ENCODE measurements at regions of chr9 and their contacts with region 1.

Region 1: DNA sequence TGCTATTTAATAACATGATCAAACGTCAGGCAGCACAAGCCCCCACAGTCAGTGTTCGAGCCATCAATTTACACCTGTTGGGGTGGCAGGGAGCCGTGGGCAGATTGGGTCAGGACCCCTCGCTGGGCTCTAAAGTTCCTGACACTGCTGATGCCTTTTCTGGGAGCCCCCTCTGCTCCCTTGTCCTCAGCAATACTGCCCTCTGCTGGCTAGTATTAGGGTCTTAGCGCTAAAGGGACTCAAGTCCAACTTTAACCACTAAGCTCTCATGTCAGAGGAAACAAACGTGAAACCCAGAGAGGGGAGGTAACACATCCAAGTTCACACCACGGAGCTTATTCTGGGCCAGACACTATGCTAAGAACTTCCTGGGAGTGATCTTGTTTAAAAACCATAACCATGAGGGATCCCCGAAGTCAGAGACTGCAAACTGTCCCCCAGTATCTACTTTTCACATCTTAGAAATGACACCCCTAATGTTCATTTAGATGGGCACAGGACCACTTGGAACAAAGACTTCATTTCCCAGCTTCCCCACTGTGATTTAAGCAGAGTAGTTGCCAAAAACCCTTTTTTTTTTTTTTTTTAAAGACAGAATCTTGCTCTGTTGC is 20.4 kb downstream of the ANKS6 start:
- DNase-seq: peak; percentile 68
- H3K4me3 ChIP-seq: no peak overlapping the region
- H3K27ac ChIP-seq: no peak overlapping the region
- H3K4me1 ChIP-seq: peaks cover 10% of the 10 kb centered on the region
- H3K27me3 ChIP-seq: no peaks in the 10 kb centered on the region
- CTCF ChIP-seq: peak; percentile 77 to 83
- POLR2A ChIP-seq: no peak

Region 2: DNA sequence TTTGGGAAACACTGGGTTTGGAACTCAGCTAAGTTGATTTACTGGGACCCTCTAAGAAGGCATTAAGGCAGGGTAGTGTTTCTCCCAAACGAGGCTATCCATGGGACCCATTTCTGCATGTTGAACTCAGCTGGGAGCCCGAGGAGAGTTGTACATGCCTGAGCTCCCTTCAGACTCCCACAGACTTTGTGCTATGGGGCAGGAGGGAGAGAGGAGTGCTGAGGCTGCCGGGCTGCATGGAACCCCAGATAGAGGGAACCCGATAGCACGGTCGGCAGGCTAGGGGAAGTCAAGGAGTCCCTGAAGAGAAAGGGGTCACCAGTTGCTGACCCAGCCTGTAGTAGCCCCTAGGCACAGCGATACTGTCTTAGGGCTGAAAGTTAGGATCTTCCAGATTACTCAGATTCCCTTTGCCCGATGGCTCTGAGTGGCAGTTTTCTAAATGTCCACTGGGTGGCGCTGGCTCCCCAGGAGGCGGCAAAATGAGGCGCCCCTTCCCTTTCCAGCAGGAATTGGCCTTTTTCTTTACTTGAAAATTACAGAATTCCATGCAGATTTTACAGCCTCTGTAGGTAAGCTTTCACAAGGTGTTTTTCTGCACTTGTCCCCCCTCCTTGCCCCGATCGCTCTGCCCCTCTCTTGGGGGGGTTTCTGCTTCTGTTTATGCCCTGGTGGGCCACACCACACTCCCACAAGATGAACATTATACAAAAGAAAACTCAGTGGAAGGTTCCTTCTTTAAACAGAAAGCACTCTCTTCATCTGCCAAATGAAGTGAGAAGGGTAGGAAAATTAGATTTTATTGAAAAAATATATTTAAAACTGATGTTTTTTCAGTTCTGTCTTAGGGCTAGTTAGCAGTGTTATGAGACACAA is 701.6 kb before region 1 on chr9:
- CTCF ChIA-PET with region 1: interaction called, 5 read pairs
- POLR2A ChIA-PET with region 1: no interaction called
- dilution Hi-C with region 1: no loop called
- intact Hi-C with region 1: loop called (anchors 1 kb)
- DNase-seq: peak; percentile 64
- H3K4me3 ChIP-seq: no peak overlapping the region
- H3K27ac ChIP-seq: no peak overlapping the region
- H3K4me1 ChIP-seq: no peaks in the 10 kb centered on the region
- H3K27me3 ChIP-seq: no peaks in the 10 kb centered on the region
- CTCF ChIP-seq: peak; percentile 87 to 93
- POLR2A ChIP-seq: no peak

Region 3: GRCh38 chr9:98263482-98264357 is 512.2 kb before region 1 on chr9:
- CTCF ChIA-PET with region 1: interaction called, 13 read pairs
- POLR2A ChIA-PET with region 1: no interaction called
- dilution Hi-C with region 1: no loop called
- intact Hi-C with region 1: no loop called
- DNase-seq: peak; percentile 82
- H3K4me3 ChIP-seq: no peak overlapping the region
- H3K27ac ChIP-seq: no peak overlapping the region
- H3K4me1 ChIP-seq: no peaks in the 10 kb centered on the region
- H3K27me3 ChIP-seq: no peaks in the 10 kb centered on the region
- CTCF ChIP-seq: peak; percentile 90 to 92
- POLR2A ChIP-seq: no peak

Region 4: GRCh38 chr9:98333703-98334582 is 442.0 kb before region 1 on chr9:
- CTCF ChIA-PET with region 1: interaction called, 12 read pairs
- POLR2A ChIA-PET with region 1: no interaction called
- dilution Hi-C with region 1: no loop called
- intact Hi-C with region 1: no loop called
- DNase-seq: peak; percentile 94
- H3K4me3 ChIP-seq: no peak overlapping the region
- H3K27ac ChIP-seq: peak overlapping the region; percentile 98
- H3K4me1 ChIP-seq: peaks cover 41% of the 10 kb centered on the region
- H3K27me3 ChIP-seq: no peaks in the 10 kb centered on the region
- CTCF ChIP-seq: no peak
- POLR2A ChIP-seq: peak; percentile 80

Region 5: DNA sequence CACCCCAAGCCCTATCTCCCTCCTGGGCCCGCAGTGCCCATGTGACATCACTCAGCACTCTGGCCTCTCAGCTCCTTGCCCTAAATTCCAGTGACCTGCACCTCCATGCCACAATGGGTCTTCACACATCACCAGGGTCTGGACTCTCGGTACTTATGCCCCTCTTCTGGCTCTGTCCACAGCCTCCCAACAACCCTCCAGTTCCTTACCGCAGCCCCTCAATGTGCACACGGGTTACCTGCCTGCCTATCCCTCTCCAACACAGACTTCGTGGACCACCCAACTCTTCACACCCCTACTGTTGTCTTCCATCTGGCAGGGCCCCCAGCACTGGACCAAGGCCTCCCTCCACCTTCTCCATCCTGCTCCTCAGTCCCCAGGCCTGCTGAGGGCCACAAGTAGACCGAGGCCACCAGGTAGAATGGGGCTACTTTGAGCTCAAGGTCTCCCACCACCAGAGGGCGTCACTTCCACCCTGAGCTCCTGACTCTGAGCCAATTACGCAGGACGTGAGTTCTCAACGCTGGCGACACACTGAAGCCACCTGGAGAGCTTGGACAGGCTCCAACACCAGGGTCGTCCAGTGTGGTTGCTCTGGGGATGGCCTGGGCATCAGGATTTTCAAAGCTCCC is 239.3 kb before region 1 on chr9:
- CTCF ChIA-PET with region 1: interaction called, 7 read pairs
- POLR2A ChIA-PET with region 1: no interaction called
- dilution Hi-C with region 1: no loop called
- intact Hi-C with region 1: loop called (anchors 2 kb)
- DNase-seq: no peak
- H3K4me3 ChIP-seq: no peak overlapping the region
- H3K27ac ChIP-seq: no peak overlapping the region
- H3K4me1 ChIP-seq: peaks cover 5% of the 10 kb centered on the region
- H3K27me3 ChIP-seq: no peaks in the 10 kb centered on the region
- CTCF ChIP-seq: peak; percentile 14 to 27
- POLR2A ChIP-seq: no peak

Region 6: DNA sequence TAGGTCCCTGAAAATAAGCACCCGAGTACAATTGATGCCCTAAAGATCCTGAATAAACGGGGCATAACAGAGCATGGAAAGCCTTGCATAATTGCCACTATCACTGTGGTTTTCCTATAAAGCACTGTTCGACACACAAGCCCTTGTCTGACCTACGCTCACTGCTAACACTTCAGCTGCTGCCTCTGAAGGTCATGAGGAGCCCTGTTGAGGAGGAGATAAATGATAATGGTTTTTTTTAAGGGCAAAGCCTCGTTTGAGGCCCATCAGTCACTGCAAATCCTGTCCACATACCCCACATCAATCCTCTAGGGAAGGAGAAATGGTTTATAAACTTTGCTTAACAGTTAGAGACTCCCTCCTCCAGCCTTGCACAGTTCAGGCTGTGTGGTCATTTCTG is 102.3 kb before region 1 on chr9:
- CTCF ChIA-PET with region 1: no interaction called
- POLR2A ChIA-PET with region 1: no interaction called
- dilution Hi-C with region 1: no loop called
- intact Hi-C with region 1: no loop called
- DNase-seq: no peak
- H3K4me3 ChIP-seq: no peak overlapping the region
- H3K27ac ChIP-seq: no peak overlapping the region
- H3K4me1 ChIP-seq: no peaks in the 10 kb centered on the region
- H3K27me3 ChIP-seq: no peaks in the 10 kb centered on the region
- CTCF ChIP-seq: no peak
- POLR2A ChIP-seq: no peak

Region 7: DNA sequence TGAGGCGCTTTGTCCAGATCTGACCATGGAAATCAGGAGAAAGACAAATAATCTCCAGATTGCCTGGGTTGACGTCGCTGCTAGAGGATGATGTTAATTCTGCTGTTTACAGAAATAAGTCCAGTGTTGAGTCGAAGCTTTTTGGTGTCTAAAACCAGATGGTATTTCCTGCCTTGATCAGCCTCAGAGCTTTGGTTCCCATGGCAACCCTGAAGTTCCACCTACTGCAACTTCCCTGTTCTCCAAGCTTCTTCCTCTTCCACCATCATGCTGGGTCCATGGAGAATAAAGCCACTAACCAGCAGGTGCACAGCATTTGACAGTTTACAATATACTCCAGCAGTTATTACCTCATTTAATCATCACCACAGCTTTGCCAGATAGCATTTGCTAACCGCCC is 49.2 kb before region 1 on chr9:
- CTCF ChIA-PET with region 1: interaction called, 24 read pairs
- POLR2A ChIA-PET with region 1: no interaction called
- dilution Hi-C with region 1: no loop called
- intact Hi-C with region 1: no loop called
- DNase-seq: no peak
- H3K4me3 ChIP-seq: no peak overlapping the region
- H3K27ac ChIP-seq: no peak overlapping the region
- H3K4me1 ChIP-seq: no peaks in the 10 kb centered on the region
- H3K27me3 ChIP-seq: peaks cover 9 to 17% of the 10 kb centered on the region in 2 experiments
- CTCF ChIP-seq: no peak
- POLR2A ChIP-seq: no peak

Region 8: GRCh38 chr9:99459919-99460318 is 684.0 kb after region 1 on chr9:
- CTCF ChIA-PET with region 1: no interaction called
- POLR2A ChIA-PET with region 1: no interaction called
- dilution Hi-C with region 1: no loop called
- intact Hi-C with region 1: no loop called
- DNase-seq: no peak
- H3K4me3 ChIP-seq: no peak overlapping the region
- H3K27ac ChIP-seq: no peak overlapping the region
- H3K4me1 ChIP-seq: no peaks in the 10 kb centered on the region
- H3K27me3 ChIP-seq: peaks cover 2 to 3% of the 10 kb centered on the region in 2 experiments
- CTCF ChIP-seq: no peak
- POLR2A ChIP-seq: no peak